KBM-7 (cell line): ENCODE measurements at regions of chr13 and their contacts with region 1.

Region 1: GRCh38 chr13:36275190-36276002 is 22.2 kb downstream of the CCDC169 start:
- DNase-seq: peak; percentile 32

Region 2: DNA sequence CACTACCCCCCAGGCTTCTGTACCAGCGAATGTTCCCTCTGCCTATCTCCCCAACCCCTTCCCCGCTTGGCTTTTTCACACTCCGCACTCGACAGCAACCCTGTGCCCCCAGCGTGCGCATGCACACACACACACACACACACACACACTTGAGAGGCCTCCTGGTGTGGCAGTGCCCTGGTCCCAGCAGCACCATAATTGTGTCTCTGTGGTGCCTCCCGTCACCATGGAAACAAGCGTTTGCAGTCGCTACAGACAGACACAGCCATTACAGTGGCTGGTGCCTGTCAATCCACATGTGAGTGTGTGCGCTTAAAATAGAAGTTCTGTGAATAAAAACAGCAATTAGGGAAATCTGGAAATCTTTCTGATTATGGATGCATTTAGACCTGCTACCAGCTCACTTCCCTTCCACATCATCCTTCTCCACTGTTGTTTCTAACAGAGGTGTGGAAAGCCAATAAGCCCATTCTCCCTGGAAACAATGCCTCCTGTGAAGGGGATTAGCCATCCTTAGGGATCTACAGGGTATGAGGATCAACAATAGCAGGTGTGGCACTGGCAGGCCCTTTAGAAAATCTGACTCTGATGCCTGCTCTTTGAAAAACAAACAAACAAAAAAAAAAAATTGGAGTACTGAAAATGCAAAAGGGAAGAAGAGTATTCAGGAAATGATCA is 290.5 kb before region 1 on chr13:
- in situ Hi-C with region 1: loop called (anchors 10 kb)
- DNase-seq: no peak

Region 3: DNA sequence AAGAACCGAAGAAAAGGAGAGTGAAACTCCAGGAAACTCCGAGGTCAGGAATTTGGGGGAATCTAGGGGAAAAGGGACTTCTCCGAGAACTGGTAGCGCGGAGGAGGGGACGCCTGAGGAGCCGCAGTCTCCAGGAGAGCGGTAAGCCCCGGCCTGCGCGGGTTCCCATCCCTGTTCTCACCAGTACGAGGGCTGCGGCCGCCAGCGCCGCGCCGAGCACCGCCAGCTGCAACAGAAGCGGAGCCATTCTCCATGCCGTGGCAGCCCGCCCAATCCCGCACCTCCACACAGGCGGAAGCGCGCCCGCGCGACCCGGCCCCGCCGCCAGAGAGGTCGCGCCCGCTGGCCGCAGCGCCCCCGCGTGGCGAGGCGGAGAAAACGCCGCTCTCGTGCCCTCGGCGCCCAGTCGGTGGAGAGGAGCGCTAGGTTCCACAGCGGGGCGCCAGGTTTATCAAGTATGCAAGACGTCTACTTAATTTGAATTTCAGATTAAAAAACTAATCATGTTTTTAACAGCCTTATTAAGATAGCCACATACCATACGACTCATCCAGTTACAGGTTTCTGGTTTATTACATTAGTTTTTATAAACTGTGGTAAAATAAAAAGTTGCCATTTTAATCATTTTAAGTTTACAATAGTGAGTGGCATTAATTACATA is 723.8 kb after region 1 on chr13 and contains the start of gene ALG5:
- in situ Hi-C with region 1: no loop called
- DNase-seq: peak; percentile 92